Activated CD4-positive, alpha-beta T cell treated with anti-CD3 and anti-CD28 coated beads, Interleukin-2, amount 10 ng/mL, durations not matched to agents 24 days and 14 days (primary cell): ENCODE measurements at regions of chr3 and their contacts with region 1.

Region 1: GRCh38 chr3:9792405-9793160 is at the starts of genes ARPC4 and TADA3:
- DNase-seq: peak; percentile 98
- H3K4me3 Mint-ChIP-seq: peak within 1 kb of the TSS; percentile 94
- H3K27ac Mint-ChIP-seq: peak within 1 kb of the TSS; percentile 100
- H3K4me1 Mint-ChIP-seq: peaks cover 47% of the 10 kb centered on the region
- H3K27me3 Mint-ChIP-seq: no peaks in the 10 kb centered on the region
- total RNA-seq, gene ARPC4: 263 and 267 TPM in 2 replicates
- total RNA-seq, gene TADA3: 63.4 and 64.6 TPM in 2 replicates

Region 2: DNA sequence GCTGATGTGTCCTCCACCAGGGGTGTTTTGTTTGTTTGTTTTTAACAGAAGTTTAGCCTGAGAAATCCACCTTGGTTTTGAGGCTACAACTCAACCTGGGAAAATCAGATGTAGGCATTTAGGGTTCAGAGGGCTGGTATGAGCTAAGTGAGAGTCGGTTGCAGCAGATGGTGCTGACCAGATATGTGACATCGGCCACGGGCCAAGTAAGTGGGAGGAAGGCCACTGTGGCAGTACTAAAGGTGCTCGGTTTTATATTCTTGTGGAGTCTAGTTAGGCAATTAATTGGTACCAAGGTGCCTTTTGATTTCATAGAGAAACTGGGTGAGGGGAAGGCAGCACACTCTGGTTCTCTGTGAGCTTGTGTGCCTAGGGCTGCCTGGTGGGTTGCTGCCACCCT is 132.7 kb before region 1 on chr3:
- intact Hi-C with region 1: no loop called
- DNase-seq: no peak
- H3K4me3 Mint-ChIP-seq: no peak overlapping the region
- H3K27ac Mint-ChIP-seq: no peak overlapping the region
- H3K4me1 Mint-ChIP-seq: peaks cover 3% of the 10 kb centered on the region
- H3K27me3 Mint-ChIP-seq: no peaks in the 10 kb centered on the region

Region 3: DNA sequence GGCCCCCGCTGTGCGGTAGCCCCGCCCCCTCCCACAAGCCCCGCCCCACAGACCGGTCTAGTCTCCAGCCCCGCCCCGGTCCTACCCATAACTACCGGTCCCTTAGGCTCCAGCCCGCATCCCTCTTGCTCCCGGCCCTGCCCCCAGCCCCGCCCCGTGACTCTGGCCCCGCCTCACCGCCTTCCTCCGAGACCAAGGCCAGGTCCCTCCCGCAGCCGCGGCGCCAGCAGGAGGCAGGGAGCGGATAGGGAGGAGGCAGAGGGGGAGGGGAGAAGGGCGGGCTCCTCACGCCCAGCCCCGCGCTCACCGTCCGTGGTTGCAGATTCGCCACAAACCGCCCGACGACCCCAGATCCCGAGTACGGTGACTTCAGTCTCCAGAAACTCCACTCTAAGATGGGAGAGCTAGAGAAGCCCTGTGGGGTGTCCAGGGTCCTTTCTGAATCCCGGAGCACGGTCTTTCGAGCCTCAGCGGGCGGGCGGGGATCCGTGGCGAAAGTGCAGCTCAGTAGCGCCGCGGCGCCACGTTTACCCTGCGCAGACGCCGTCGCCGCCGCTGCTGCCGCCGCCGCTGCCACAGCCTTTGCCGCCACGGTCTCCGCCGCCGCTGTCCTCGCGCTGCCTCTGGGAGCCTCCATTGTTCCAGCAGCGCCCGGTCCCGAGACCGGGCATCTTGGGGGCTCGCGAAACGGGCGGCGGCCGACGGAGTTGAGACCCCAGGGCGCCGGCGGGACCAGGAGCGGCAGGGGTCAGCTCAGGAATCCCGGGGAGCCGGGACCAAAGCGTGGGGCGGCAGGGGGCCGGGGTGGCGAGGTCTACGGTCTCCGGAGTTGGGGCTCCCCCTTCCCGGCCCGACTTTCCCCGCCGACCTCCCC is 61.1 kb before region 1 on chr3 and contains the start of gene BRPF1:
- intact Hi-C with region 1: loop called (anchors 1 kb)
- DNase-seq: peak; percentile 98
- H3K4me3 Mint-ChIP-seq: peak within 1 kb of the TSS; percentile 87
- H3K27ac Mint-ChIP-seq: peak within 1 kb of the TSS; percentile 95
- H3K4me1 Mint-ChIP-seq: peaks cover 65% of the 10 kb centered on the region
- H3K27me3 Mint-ChIP-seq: no peaks in the 10 kb centered on the region
- total RNA-seq, gene BRPF1: 41.7 and 45.3 TPM in 2 replicates

Region 4: DNA sequence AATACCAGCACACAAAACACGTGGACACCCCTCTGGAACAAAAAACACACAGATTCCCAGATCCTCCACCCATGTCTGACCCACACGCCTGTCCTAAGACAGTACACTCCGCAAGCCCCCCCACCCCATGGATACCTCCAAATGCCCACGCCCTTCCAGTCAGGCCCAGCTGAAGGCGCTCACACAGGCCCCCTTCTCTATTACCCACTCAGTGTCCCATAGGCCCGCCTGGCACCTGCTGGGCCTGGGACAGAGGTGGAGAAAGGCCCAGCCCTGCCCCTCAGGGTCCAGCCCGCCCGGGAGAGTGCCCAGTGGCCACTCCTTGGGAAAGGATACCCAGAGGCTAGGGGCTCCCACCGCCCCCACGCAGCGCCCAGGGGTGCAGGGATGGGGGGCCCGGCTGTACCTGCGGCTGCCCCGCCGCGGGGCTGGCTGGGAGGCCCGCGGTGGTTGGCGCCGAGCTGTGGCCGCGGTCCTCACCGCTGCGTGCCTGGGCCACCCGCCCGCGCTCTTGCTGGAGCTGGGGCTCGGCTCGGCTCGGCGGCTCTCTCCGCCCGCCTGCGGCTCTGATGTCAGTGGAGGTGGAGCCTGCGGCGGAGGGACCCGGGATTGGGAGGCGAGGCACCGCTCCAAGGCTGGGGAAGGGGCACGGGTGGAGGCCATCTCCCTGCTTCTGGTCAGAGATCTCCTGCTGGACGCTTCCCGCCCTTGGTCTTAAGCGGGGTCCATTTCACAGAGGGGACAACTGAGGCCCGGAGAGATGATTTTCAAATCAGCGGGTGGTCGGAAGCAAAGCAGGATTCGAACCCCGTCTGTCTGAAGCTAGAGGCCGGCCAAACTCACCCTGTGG is 22.9 kb before region 1 on chr3 and contains the start of gene CAMK1:
- intact Hi-C with region 1: loop called (anchors 1 kb)
- DNase-seq: peak; percentile 93
- H3K4me3 Mint-ChIP-seq: peak within 1 kb of the TSS; percentile 82
- H3K27ac Mint-ChIP-seq: peak within 1 kb of the TSS; percentile 80
- H3K4me1 Mint-ChIP-seq: peaks cover 43% of the 10 kb centered on the region
- H3K27me3 Mint-ChIP-seq: no peaks in the 10 kb centered on the region
- total RNA-seq, gene CAMK1: 81.0 and 83.7 TPM in 2 replicates

Region 5: GRCh38 chr3:9809615-9810432 is 17.2 kb after region 1 on chr3 and contains the start of gene TTLL3:
- intact Hi-C with region 1: loop called (anchors 1 kb)
- DNase-seq: peak; percentile 84
- H3K4me3 Mint-ChIP-seq: peak within 1 kb of the TSS; percentile 82
- H3K27ac Mint-ChIP-seq: peak within 1 kb of the TSS; percentile 92
- H3K4me1 Mint-ChIP-seq: peaks cover 37% of the 10 kb centered on the region
- H3K27me3 Mint-ChIP-seq: no peaks in the 10 kb centered on the region
- total RNA-seq, gene TTLL3: 33.2 and 37.7 TPM in 2 replicates

Region 6: DNA sequence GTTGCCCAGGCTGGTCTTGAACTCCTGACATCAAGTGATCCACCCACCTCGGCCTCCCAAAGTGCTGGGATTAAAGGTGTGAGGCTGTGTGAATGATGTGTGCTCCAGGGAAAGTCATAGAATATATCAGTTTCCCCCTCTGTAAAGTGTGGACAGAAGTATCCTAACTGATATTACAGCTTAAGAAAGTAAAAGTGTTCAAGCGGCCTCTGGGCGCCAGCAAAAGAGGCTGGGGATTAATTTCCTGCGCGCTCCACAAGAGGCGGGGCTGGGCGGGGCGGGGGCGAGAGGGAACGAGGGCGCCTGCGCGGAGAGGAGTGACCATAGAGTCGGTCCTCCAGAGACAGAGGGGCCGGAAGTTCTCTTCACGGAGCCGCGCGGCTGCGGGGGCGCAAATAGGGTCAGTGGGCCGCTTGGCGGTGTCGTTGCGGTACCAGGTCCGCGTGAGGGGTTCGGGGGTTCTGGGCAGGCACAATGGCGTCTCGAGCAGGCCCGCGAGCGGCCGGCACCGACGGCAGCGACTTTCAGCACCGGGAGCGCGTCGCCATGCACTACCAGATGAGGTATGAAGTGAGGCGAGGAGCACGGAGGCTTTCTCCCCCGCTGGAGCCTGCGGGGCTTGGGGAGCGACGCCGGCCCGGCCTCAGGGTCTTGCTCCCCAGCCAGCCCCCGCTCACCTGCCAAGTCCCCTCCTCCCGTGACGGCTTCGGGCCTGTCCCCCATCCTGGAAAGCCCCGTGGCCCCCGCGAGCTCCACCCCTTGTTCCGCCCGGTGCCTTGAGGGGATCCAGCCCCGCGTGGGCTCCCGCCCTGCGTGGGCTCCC is 97.9 kb after region 1 on chr3 and contains the start of gene JAGN1:
- intact Hi-C with region 1: loop called (anchors 2 kb)
- DNase-seq: peak; percentile 96
- H3K4me3 Mint-ChIP-seq: peak within 1 kb of the TSS; percentile 98
- H3K27ac Mint-ChIP-seq: peak within 1 kb of the TSS; percentile 99
- H3K4me1 Mint-ChIP-seq: peaks cover 33% of the 10 kb centered on the region
- H3K27me3 Mint-ChIP-seq: no peaks in the 10 kb centered on the region
- total RNA-seq, gene JAGN1: 39.5 and 41.0 TPM in 2 replicates